CD4-positive, alpha-beta memory T cell (primary cell): ENCODE measurements at regions of chr13 and their contacts with region 1.

Region 1: DNA sequence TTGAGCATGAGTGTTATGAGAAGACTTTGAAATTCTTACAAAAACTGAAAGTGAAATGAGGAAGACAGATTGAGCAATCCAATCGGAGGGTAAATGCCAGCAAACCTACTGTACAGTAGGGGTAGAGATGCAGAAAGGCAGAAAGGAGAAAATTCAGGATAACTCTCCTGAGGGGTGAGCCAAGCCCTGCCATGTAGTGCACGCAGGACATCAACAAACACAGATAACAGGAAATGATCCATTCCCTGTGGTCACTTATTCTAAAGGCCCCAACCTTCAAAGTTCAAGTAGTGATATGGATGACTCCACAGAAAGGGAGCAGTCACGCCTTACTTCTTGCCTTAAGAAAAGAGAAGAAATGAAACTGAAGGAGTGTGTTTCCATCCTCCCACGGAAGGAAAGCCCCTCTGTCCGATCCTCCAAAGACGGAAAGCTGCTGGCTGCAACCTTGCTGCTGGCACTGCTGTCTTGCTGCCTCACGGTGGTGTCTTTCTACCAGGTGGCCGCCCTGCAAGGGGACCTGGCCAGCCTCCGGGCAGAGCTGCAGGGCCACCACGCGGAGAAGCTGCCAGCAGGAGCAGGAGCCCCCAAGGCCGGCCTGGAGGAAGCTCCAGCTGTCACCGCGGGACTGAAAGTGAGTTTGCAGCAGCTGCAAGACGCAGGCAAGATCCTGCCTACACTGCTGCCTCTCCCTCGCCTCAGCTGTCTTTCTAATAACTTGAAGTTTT is at the start of gene TNFSF13B:
- DNase-seq: peak; percentile 16 to 60 (median 28)
- H3K4me3 ChIP-seq: peak within 1 kb of the TSS; percentile 49 to 58
- H3K4me3 Mint-ChIP-seq: peak within 1 kb of the TSS; percentile 83 to 95 (median 90)
- H3K27ac ChIP-seq: peak within 1 kb of the TSS; percentile 51
- H3K27ac Mint-ChIP-seq: peak within 1 kb of the TSS; percentile 81 to 94 (median 90)
- H3K4me1 ChIP-seq: peaks cover 31% of the 10 kb centered on the region
- H3K4me1 Mint-ChIP-seq: peaks cover 32 to 72% (median 47%) of the 10 kb centered on the region in 4 donors
- H3K27me3 ChIP-seq: no peaks in the 10 kb centered on the region
- H3K27me3 Mint-ChIP-seq: no peaks in the 10 kb centered on the region
- total RNA-seq, gene TNFSF13B: 35.8 to 37.9 TPM

Region 2: GRCh38 chr13:108218044-108218974 is 51.5 kb before region 1 on chr13 and contains the start of gene ABHD13:
- CTCF ChIA-PET with region 1: no interaction called
- POLR2A ChIA-PET with region 1: interaction called, 6 read pairs
- intact Hi-C with region 1: loop called (anchors 2 kb)
- DNase-seq: peak; percentile 91 to 96 (median 92)
- H3K4me3 ChIP-seq: peak within 1 kb of the TSS; percentile 68 to 94
- H3K4me3 Mint-ChIP-seq: peak within 1 kb of the TSS; percentile 94 to 99 (median 96)
- H3K27ac ChIP-seq: peak within 1 kb of the TSS; percentile 86
- H3K27ac Mint-ChIP-seq: peak within 1 kb of the TSS; percentile 95 to 99 (median 96)
- H3K4me1 ChIP-seq: peaks cover 69% of the 10 kb centered on the region
- H3K4me1 Mint-ChIP-seq: peaks cover 34 to 76% (median 50%) of the 10 kb centered on the region in 4 donors
- H3K27me3 ChIP-seq: no peaks in the 10 kb centered on the region
- H3K27me3 Mint-ChIP-seq: no peaks in the 10 kb centered on the region
- total RNA-seq, gene ABHD13: 22.9 to 23.2 TPM

Region 3: DNA sequence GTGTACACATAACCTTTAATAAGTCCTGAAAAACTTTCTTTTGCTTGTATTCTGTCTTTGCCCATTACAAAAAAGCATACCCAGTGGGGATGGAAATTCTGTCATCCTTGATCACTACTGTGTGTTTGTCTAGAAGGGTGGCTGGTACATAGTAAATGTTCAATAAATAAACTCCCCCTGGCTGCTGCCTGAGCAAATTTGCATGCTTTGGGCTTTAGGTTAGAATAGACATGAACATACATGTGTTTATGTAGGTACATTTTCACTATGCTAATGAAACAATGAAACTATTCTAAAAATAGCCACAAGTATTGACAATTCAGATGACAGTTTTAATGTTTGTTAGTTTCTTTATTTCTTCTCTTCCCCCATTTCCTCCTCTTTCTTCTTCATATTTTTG is 35.9 kb after region 1 on chr13:
- CTCF ChIA-PET with region 1: interaction called, 3 read pairs
- POLR2A ChIA-PET with region 1: interaction called, 11 read pairs
- intact Hi-C with region 1: loop called (anchors 2 kb)
- DNase-seq: no peak
- H3K4me3 ChIP-seq: no peak overlapping the region
- H3K4me3 Mint-ChIP-seq: peak overlapping the region in 3 of 8 donors; percentile 28 to 44 (median 34)
- H3K27ac ChIP-seq: no peak overlapping the region
- H3K27ac Mint-ChIP-seq: peak overlapping the region in 6 of 7 donors; percentile 15 to 91 (median 44)
- H3K4me1 ChIP-seq: peaks cover 26% of the 10 kb centered on the region
- H3K4me1 Mint-ChIP-seq: peaks cover 10 to 31% (median 14%) of the 10 kb centered on the region in 4 donors
- H3K27me3 ChIP-seq: no peaks in the 10 kb centered on the region
- H3K27me3 Mint-ChIP-seq: no peaks in the 10 kb centered on the region

Region 4: GRCh38 chr13:108322206-108322824 is 52.5 kb after region 1 on chr13:
- CTCF ChIA-PET with region 1: interaction called, 5 read pairs
- POLR2A ChIA-PET with region 1: interaction called, 3 read pairs
- intact Hi-C with region 1: loop called (anchors 1 kb)
- DNase-seq: peak in 4 of 5 donors; percentile 51 to 60 (median 54)
- H3K4me3 ChIP-seq: no peak overlapping the region
- H3K4me3 Mint-ChIP-seq: peak overlapping the region in 2 of 8 donors; percentile 37 to 40
- H3K27ac ChIP-seq: no peak overlapping the region
- H3K27ac Mint-ChIP-seq: peak overlapping the region in 1 of 7 donors; percentile 41
- H3K4me1 ChIP-seq: peaks cover 21% of the 10 kb centered on the region
- H3K4me1 Mint-ChIP-seq: peaks cover 13 to 49% (median 33%) of the 10 kb centered on the region in 4 donors
- H3K27me3 ChIP-seq: no peaks in the 10 kb centered on the region
- H3K27me3 Mint-ChIP-seq: no peaks in the 10 kb centered on the region

Region 5: DNA sequence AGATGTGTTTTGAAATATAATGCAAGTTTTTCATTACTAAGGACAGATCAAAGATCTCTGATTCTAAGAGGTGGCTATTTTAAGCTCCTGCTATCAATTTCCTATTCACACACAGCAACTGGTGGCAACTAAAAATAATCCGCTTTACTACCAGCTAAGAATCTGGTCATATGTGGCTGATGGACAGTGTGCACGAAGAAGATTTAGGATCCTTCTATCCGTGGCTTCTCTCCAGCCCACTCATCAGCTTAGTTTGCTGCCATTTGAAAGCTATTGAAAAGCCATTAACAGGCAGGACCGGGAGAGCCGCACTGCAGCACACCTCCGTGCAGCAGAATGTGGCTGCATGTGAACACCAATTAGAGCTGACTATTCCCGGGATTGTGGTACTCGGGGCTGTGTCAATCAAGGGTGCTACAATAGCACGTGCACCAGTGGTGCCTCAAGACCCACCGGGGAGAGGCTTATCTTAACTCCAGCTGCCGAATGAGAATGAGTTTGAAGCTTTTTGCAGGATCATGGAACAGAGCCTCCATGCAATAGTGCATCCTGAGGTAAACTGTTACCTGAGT is 359.5 kb after region 1 on chr13 and contains the start of gene MYO16:
- CTCF ChIA-PET with region 1: no interaction called
- POLR2A ChIA-PET with region 1: no interaction called
- intact Hi-C with region 1: no loop called
- DNase-seq: no peak
- H3K4me3 ChIP-seq: no peak within 1 kb of the TSS
- H3K4me3 Mint-ChIP-seq: no peak within 1 kb of the TSS
- H3K27ac ChIP-seq: no peak within 1 kb of the TSS
- H3K27ac Mint-ChIP-seq: no peak within 1 kb of the TSS
- H3K4me1 ChIP-seq: no peaks in the 10 kb centered on the region
- H3K4me1 Mint-ChIP-seq: no peaks in the 10 kb centered on the region
- H3K27me3 ChIP-seq: no peaks in the 10 kb centered on the region
- H3K27me3 Mint-ChIP-seq: no peaks in the 10 kb centered on the region
- total RNA-seq, gene MYO16: 12.0 to 14.9 TPM